ENCODE measurements at regions of chr4 and their contacts with region 1.

Region 1: DNA sequence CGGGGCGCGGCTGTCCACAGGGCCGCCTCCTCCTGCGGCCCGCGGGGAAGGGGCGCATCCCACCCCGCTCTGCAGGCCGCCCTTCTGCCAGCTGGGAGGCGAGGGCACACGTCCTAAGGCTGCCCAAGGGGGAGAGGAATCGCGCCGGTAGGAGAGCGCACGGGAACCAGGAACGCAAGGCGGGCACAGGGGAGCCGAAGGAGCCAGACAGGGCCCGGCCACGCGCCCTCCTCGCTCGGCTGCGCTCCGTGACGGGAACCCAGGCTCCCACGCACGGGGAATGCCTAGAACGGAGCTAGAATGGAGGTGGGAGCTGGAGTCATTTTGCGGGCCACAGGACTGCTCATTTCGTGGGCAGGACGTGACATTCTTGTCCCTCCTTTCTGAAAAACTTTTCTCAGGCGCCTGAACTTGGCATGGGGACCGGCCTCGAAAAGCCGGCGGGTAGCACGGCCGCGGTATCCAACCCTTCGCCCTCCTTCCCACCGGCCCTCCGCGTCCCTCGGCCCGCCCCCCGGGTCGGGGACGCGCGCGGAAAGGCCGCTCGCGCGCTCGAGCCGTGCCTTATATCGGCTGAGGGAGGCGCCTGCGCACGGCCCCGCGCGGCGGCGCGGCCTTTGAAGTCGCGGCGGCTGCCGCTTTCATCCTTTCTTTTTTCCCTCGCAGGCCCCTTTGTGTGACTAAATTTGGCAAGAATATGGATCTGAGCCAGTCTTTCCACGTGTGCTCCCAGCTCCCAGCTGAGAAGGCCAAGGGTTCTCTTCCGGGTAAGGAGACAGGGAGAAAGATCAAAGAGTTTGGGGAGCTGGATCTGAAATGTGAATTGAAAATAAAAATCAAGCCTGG is 4.2 kb upstream of the LEF1 start:
- DNase-seq: peak; percentile 86
- ATAC-seq: peak; percentile 46
- H3K4me3 Mint-ChIP-seq: peak overlapping the region; percentile 99
- H3K27ac Mint-ChIP-seq: peak overlapping the region; percentile 89
- H3K4me1 Mint-ChIP-seq: peaks cover 44% of the 10 kb centered on the region
- H3K27me3 Mint-ChIP-seq: peaks cover 5% of the 10 kb centered on the region

Region 2: DNA sequence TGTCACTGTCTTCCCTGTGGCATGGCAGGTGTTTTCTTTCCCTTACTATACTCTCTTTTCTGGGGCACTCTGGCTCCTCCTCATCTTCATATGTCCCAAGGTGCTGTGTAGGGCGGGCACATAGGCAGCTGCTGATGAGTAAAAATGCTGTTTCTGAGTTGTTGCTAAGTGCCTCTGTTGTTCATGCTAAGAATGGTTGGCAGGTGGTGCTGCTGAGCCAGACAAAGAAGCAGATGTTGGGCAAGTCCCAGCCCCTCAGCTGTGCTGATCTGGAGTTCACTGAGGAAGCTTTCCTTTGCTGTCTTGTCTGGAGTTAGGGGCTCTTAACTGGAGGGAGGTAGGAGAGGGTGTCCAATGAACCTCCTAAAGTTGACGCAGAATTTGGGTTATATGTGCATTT is 142.6 kb before region 1 on chr4:
- POLR2A ChIA-PET with region 1: interaction called, 14 read pairs
- DNase-seq: peak; percentile 63
- ATAC-seq: peak; percentile 79
- H3K4me3 Mint-ChIP-seq: peak overlapping the region; percentile 87
- H3K27ac Mint-ChIP-seq: peak overlapping the region; percentile 91
- H3K4me1 Mint-ChIP-seq: peaks cover 56% of the 10 kb centered on the region
- H3K27me3 Mint-ChIP-seq: no peaks in the 10 kb centered on the region

Region 3: DNA sequence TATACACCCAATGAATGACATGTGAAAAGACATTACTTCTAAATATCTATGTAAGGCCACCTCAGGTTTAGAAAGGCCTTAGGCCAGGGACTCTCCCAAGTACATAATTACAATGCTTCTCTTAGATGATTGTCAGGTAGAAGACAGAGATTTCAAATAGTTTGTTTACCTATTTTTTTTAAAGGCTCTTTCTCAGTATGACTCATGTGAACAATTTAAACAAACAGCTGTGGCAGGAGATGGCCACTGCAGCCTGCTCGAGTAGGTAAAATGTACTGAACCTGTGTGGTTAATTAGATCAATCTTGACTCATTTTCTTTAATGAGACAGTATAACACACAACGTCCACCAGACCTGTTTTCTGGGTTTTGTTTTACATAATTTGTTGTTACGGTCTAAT is 54.5 kb before region 1 on chr4:
- POLR2A ChIA-PET with region 1: interaction called, 73 read pairs
- DNase-seq: no peak
- ATAC-seq: peak; percentile 18
- H3K4me3 Mint-ChIP-seq: peak overlapping the region; percentile 78
- H3K27ac Mint-ChIP-seq: peak overlapping the region; percentile 85
- H3K4me1 Mint-ChIP-seq: peaks cover 81% of the 10 kb centered on the region
- H3K27me3 Mint-ChIP-seq: no peaks in the 10 kb centered on the region

Region 4: DNA sequence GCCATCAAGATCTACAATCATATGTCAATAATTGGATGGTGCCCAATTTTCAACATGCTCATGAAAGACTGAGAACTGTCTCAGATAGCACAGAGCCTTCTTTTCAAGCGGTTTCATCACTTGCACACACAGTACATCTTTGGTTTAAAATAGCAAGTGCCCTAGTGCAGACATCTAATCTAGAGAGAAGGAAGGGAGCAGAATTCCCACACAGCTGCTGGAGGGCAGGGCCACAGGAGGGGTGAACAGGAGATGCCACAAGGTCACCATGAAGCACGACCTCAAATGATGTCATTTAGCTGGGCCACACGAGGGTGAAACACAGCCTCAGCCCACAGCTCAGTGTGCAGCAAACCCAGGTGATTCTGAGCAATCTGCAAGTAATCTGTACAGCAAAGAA is 28.5 kb before region 1 on chr4:
- POLR2A ChIA-PET with region 1: interaction called, 37 read pairs
- DNase-seq: peak; percentile 58
- ATAC-seq: peak; percentile 51
- H3K4me3 Mint-ChIP-seq: peak overlapping the region; percentile 76
- H3K27ac Mint-ChIP-seq: peak overlapping the region; percentile 78
- H3K4me1 Mint-ChIP-seq: peaks cover 77% of the 10 kb centered on the region
- H3K27me3 Mint-ChIP-seq: no peaks in the 10 kb centered on the region

Region 5: DNA sequence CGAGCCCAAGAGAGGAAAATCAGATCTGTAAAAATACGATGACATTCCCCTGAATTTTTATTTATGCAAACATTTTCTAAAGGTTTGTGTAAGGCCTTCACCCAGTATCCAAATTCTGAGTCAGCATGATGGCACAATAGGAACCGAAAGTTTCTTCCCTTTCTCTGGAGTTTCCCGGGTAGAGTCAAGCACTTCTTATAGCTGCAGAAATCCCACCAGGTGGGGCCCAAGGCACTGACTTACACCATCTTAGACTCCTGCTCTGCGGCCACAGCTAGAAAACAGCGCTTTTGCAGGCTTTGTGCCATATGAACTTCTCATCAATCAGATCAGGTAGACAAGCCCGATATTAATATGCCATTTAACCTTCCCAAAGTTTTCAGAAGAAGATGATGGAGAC is 17.6 kb before region 1 on chr4:
- POLR2A ChIA-PET with region 1: interaction called, 16 read pairs
- DNase-seq: no peak
- ATAC-seq: peak; percentile 28
- H3K4me3 Mint-ChIP-seq: peak overlapping the region; percentile 80
- H3K27ac Mint-ChIP-seq: peak overlapping the region; percentile 70
- H3K4me1 Mint-ChIP-seq: peaks cover 76% of the 10 kb centered on the region
- H3K27me3 Mint-ChIP-seq: no peaks in the 10 kb centered on the region

Region 6: GRCh38 chr4:108160741-108161352 is 12.1 kb before region 1 on chr4:
- POLR2A ChIA-PET with region 1: interaction called, 16 read pairs
- DNase-seq: no peak
- ATAC-seq: peak; percentile 41
- H3K4me3 Mint-ChIP-seq: peak overlapping the region; percentile 80
- H3K27ac Mint-ChIP-seq: peak overlapping the region; percentile 83
- H3K4me1 Mint-ChIP-seq: peaks cover 58% of the 10 kb centered on the region
- H3K27me3 Mint-ChIP-seq: no peaks in the 10 kb centered on the region

Region 7: DNA sequence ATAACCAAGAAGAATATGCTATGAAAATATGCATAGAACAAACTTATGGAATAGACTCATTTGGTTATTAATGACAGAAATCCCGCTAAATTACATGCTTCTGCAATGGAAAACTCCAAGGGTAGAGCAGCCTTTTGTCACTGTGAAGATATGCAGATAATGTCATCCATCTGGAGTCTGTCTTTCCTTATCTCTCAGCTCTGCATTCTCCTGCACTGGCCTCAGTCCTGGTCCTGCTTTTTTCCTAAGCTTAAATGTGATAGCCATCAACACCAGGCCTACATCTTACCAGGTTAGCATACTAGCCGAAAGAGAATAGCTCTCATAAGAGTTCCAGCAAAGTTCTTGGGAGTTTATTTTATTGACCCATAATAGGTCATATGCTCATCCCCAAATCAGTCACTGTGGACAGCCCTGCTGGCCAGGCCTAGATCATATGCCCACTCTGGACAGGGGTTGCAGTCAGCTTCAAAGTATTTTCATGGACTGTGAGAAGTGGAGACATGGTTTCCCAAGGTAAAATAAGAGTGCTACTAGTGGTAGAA is 82.3 kb after region 1 on chr4:
- POLR2A ChIA-PET with region 1: no interaction called
- DNase-seq: no peak
- ATAC-seq: no peak
- H3K4me3 Mint-ChIP-seq: no peak overlapping the region
- H3K27ac Mint-ChIP-seq: no peak overlapping the region
- H3K4me1 Mint-ChIP-seq: peaks cover 2% of the 10 kb centered on the region
- H3K27me3 Mint-ChIP-seq: no peaks in the 10 kb centered on the region

Region 8: DNA sequence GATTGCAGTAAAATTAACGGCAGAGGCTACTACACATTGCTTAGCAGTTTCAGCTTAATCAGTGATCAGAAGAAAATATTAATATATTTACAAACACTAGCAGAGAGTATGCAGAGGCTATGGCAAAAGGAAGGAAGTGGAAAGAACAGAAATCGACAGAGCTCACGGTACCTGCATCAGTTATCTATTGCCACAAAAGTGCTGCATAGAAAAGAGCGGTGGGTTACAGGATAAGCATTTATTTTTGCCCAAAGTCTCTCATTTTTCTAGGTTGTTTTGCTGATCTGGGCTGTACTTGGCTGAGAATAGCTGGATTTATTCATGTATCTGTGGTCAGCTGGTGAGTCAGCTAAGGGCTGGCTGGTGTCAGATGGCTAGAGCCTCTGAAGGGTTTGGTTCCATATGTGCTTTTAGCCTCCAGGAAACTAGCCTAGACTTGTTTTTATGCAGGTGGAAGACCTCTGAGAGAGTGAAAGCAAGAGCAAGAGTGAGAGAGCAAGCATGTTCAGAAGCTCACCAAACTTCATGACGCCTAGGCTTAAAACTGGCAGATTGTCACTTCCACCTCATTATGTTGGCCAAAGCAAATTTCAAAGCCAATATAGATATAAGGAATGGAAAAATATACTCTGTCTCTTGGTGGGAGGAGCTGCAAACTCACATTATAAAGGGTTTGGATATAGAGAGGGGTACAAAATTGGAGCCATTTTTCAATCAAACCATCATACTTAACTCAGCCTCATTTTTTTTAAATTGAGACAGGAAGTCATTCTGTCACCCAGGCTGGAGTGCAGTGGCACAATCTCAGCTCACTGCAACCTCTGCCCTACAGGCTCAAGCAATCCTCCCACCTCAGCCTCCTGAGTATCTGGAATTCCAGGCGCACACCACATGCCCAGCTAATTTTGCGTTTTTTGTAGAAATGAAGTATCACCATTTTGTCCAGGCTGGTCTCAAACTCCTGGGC is 294.2 kb after region 1 on chr4:
- POLR2A ChIA-PET with region 1: interaction called, 11 read pairs
- DNase-seq: no peak
- ATAC-seq: peak; percentile 91
- H3K4me3 Mint-ChIP-seq: peak overlapping the region; percentile 67
- H3K27ac Mint-ChIP-seq: peak overlapping the region; percentile 99
- H3K4me1 Mint-ChIP-seq: peaks cover 53% of the 10 kb centered on the region
- H3K27me3 Mint-ChIP-seq: no peaks in the 10 kb centered on the region

Measured in activated naive CD8-positive, alpha-beta T cell treated with anti-CD3 and anti-CD28 coated beads, Interleukin-2, amount 10 ng/mL, durations not matched to agents 7 days and 5 days (primary cell).